ENCODE measurements at regions of chr3 and their contacts with region 1.

Region 1: GRCh38 chr3:57555738-57556458 is at the start of gene PDE12:
- ATAC-seq: peak; percentile 83 to 94 (median 89)
- H3K4me3 ChIP-seq: peak within 1 kb of the TSS; percentile 62 to 96 (median 90)
- H3K27ac ChIP-seq: peak within 1 kb of the TSS; percentile 98 to 99
- H3K4me1 ChIP-seq: peaks cover 15 to 17% of the 10 kb centered on the region in 2 donors
- total RNA-seq, gene PDE12: 7.9 to 16.8 (median 11.3) TPM

Region 2: GRCh38 chr3:57078344-57078634 is 477.6 kb before region 1 on chr3:
- in situ Hi-C with region 1: no loop called
- ATAC-seq: peak in 7 of 8 experiments; percentile 31 to 49 (median 40)
- H3K4me3 ChIP-seq: peak overlapping the region; percentile 40 to 69 (median 55)
- H3K27ac ChIP-seq: no peak overlapping the region
- H3K4me1 ChIP-seq: no peaks in the 10 kb centered on the region

Region 3: DNA sequence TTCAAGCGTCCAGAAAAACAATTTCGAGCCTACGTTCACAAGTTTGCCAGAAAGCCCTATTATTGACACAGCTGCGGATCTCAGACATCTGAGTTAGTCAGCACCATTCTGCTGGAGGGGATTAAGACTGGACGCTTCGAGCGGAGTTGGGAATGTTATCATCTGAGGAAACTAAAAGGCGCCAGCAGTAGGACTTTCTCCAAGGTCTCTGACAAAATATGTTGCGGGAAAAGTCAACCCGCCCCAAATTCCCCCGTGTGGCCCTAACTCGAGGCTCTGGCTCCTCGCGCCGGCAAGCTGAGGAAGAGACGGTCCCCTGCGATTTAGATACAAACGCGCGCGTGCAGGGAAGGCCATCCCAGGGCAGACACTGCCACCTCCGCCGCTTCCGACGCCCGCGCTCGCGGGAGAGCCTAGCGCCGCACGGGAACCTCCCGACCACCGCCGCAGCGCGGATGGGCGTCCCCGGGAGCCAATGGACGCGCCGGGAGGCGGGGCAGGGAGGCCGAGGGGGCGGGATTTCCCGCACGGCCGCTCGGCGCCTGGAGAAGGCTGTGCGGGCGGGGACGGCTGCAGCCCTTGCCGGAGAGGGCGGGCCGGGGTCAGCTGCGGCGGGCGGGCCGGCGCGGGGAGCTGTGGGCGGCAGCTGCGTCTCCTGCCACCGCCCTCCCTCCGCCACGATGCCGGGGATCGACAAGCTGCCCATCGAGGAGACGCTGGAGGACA is 328.5 kb before region 1 on chr3 and contains the start of gene APPL1:
- in situ Hi-C with region 1: loop called in 1 of 9 experiments (anchors 25 kb)
- ATAC-seq: peak; percentile 87 to 97 (median 94)
- H3K4me3 ChIP-seq: peak within 1 kb of the TSS; percentile 60 to 95 (median 79)
- H3K27ac ChIP-seq: peak within 1 kb of the TSS; percentile 78 to 85
- H3K4me1 ChIP-seq: peaks cover 2 to 10% of the 10 kb centered on the region in 2 donors
- total RNA-seq, gene APPL1: 22.2 to 47.0 (median 27.5) TPM

Region 4: GRCh38 chr3:57397175-57398026 is 158.5 kb before region 1 on chr3:
- in situ Hi-C with region 1: loop called in 1 of 9 experiments (anchors 25 kb)
- ATAC-seq: peak in 3 of 8 experiments; percentile 90 to 94 (median 93)
- H3K4me3 ChIP-seq: no peak overlapping the region
- H3K27ac ChIP-seq: no peak overlapping the region
- H3K4me1 ChIP-seq: no peaks in the 10 kb centered on the region